Natural killer cell (primary cell): ENCODE measurements at regions of chr1 and their contacts with region 1.

Region 1: DNA sequence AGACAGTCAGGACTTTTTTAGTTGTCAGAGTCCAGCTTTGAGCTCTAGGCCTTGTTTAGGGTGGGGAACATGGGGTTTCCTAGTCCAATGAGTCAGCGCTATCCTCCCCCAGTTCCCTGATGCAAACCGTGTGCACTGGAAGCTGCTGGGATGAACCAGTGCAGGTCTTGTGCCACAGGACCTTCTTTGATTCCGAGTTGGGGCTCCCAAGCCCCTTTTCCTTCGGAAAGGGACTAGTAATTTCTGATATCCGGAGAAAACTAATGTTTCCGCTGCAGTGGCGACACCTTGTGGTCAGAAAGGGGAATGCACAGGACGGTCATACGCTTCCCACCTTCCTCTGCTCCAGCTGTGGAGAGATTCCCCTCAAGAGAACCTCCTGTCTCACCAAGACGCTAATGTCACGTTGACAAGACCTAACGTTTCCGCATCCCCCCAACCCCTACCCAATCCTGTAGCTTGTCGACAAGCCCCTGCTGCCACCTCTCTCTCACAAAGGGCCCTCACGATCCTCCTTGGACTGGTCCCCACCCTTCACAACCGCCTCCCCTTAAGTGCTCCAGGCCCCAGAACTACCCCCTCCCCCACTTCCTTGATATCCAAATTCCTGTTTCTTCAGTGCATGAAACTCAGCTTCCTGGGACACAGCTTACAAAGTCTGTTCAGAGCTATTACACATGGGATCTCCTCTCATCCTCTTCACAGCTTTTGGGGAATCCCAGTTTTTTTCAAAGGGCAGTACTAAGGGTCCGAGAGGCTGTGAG is 30.9 kb downstream of the GPA33 start:
- DNase-seq: peak; percentile 72 to 84
- ATAC-seq: peak; percentile 63 to 81 (median 77)
- H3K4me3 ChIP-seq: no peak overlapping the region
- H3K4me3 Mint-ChIP-seq: no peak overlapping the region
- H3K27ac ChIP-seq: no peak overlapping the region
- H3K27ac Mint-ChIP-seq: peak overlapping the region in 1 of 2 donors; percentile 2
- H3K4me1 ChIP-seq: peaks cover 24% of the 10 kb centered on the region
- H3K4me1 Mint-ChIP-seq: peaks cover 7 to 23% of the 10 kb centered on the region in 2 donors
- H3K27me3 ChIP-seq: no peaks in the 10 kb centered on the region
- H3K27me3 Mint-ChIP-seq: peaks cover 0 to 3% of the 10 kb centered on the region in 2 donors
- CTCF ChIP-seq: peak; percentile 95

Region 2: GRCh38 chr1:165928075-165928731 is 1131.0 kb before region 1 on chr1:
- intact Hi-C with region 1: loop called (anchors 5 kb)
- DNase-seq: peak in 1 of 2 donors; percentile 72
- ATAC-seq: peak; percentile 70 to 75 (median 75)
- H3K4me3 ChIP-seq: no peak overlapping the region
- H3K4me3 Mint-ChIP-seq: no peak overlapping the region
- H3K27ac ChIP-seq: no peak overlapping the region
- H3K27ac Mint-ChIP-seq: no peak overlapping the region
- H3K4me1 ChIP-seq: no peaks in the 10 kb centered on the region
- H3K4me1 Mint-ChIP-seq: no peaks in the 10 kb centered on the region
- H3K27me3 ChIP-seq: no peaks in the 10 kb centered on the region
- H3K27me3 Mint-ChIP-seq: peaks cover 8 to 20% of the 10 kb centered on the region in 2 donors
- CTCF ChIP-seq: peak; percentile 57

Region 3: GRCh38 chr1:167430134-167430856 is 371.1 kb after region 1 on chr1:
- intact Hi-C with region 1: no loop called
- DNase-seq: peak; percentile 52 to 58
- ATAC-seq: peak; percentile 20 to 50 (median 21)
- H3K4me3 ChIP-seq: no peak overlapping the region
- H3K4me3 Mint-ChIP-seq: peak overlapping the region; percentile 85
- H3K27ac ChIP-seq: peak overlapping the region; percentile 98
- H3K27ac Mint-ChIP-seq: peak overlapping the region; percentile 91 to 100
- H3K4me1 ChIP-seq: peaks cover 82% of the 10 kb centered on the region
- H3K4me1 Mint-ChIP-seq: peaks cover 87 to 89% of the 10 kb centered on the region in 2 donors
- H3K27me3 ChIP-seq: no peaks in the 10 kb centered on the region
- H3K27me3 Mint-ChIP-seq: no peaks in the 10 kb centered on the region
- CTCF ChIP-seq: no peak